Mammary epithelial cell (primary cell): ENCODE measurements at regions of chr6 and their contacts with region 1.

Region 1: GRCh38 chr6:138109042-138109997 is 2.1 kb upstream of the PERP start:
- DNase-seq: peak; percentile 76
- H3K4me3 ChIP-seq: peak overlapping the region; percentile 7 to 66 (median 25)
- H3K27ac ChIP-seq: peak overlapping the region; percentile 99
- H3K4me1 ChIP-seq: peaks cover 16% of the 10 kb centered on the region
- H3K27me3 ChIP-seq: no peaks in the 10 kb centered on the region
- CTCF ChIP-seq: peak; percentile 96 to 99

Region 2: GRCh38 chr6:137697267-137697938 is 411.9 kb before region 1 on chr6:
- CTCF ChIA-PET with region 1: no interaction called
- dilution Hi-C with region 1: no loop called
- in situ Hi-C with region 1: loop called in 1 of 2 experiments (anchors 25 kb)
- intact Hi-C with region 1: loop called (anchors 2 kb)
- DNase-seq: peak; percentile 63
- H3K4me3 ChIP-seq: no peak overlapping the region
- H3K27ac ChIP-seq: no peak overlapping the region
- H3K4me1 ChIP-seq: peaks cover 20% of the 10 kb centered on the region
- H3K27me3 ChIP-seq: no peaks in the 10 kb centered on the region
- CTCF ChIP-seq: no peak

Region 3: DNA sequence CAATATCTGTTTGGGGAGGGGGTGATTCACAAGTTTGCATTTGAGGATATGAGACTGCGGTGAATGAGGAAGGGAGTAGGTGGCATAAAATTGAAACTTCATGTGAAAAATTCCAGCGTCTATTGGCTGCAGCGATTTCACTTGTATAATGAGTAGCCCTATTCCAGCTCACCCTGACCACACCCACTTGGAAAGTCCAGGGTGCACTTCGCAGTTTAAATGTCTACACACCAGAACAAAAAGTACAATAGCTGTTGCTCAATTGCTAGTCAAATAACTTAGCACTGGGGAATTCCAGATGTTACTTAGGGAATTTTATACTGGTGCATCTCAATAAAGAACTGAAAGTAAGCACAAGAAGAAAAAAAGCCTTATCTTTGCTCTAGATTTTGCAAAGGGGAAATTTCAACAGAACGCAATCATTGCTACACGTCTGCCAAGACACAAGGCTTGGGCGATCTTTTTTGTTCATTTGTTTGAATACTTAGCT is 236.0 kb before region 1 on chr6:
- CTCF ChIA-PET with region 1: no interaction called
- dilution Hi-C with region 1: no loop called
- in situ Hi-C with region 1: no loop called
- intact Hi-C with region 1: loop called (anchors 2 kb)
- DNase-seq: peak; percentile 96
- H3K4me3 ChIP-seq: peak overlapping the region; percentile 12 to 32 (median 18)
- H3K27ac ChIP-seq: peak overlapping the region; percentile 95
- H3K4me1 ChIP-seq: peaks cover 52% of the 10 kb centered on the region
- H3K27me3 ChIP-seq: no peaks in the 10 kb centered on the region
- CTCF ChIP-seq: no peak

Region 4: DNA sequence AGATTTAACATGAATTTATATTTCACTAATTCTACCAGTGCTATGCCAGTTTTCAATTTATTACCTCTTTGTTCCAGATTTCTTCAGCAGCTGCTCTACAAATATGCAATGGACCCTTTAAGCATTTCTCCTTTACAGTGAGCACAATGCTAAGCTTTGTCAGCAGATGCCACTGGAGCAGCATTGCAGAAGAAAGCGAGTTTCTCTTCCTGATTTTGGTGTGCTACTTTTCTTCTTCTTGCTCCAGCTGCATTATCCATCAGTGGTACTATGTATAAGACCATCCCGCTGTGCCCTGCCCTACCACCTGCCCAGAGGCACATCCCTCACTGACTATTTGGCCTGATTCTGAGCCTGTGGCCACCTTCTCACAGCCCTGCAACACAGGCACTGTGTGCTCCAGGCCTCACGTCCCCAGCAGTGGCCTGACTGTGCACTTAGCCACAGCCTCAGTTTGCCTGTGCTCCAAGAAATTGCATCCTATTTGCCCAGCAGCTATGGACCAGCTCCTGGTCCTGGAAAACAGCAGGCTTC is 158.2 kb before region 1 on chr6:
- CTCF ChIA-PET with region 1: no interaction called
- dilution Hi-C with region 1: no loop called
- in situ Hi-C with region 1: no loop called
- intact Hi-C with region 1: no loop called
- DNase-seq: no peak
- H3K4me3 ChIP-seq: no peak overlapping the region
- H3K27ac ChIP-seq: no peak overlapping the region
- H3K4me1 ChIP-seq: no peaks in the 10 kb centered on the region
- H3K27me3 ChIP-seq: no peaks in the 10 kb centered on the region
- CTCF ChIP-seq: no peak

Region 5: DNA sequence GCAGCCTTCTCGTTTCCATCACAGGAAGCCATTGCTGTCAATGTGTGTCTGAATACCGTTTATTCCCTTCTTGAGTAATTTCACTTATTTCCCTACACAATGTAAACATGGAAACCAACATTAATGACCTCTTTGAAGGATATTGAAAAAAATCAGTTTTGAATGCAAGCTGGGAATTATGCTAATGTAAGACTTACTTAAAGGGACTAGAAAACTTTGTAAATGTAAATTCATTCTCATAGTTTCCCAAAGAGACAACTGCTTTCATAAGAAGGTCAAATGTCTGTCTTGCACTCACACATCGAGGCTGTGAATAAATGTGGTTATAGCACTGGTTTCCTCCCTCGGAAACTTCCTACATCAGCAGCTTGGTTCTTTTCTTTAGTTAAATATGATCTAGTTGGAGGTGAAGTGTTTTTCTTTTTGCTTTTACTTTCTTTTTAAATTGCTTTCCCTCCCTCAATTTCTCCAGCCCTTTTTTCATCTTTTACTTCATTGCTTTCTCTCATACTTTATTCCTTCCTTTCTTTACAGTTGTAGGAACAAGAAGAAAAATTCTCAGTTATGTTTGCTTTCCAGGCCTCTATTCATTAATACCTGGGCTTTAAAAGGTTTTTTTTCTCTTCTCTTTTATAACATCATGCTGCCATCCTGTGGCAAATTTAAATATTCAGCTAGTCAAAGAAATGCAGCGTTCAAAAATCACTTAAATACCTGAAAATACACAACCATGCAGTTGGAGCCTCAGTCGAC is 134.0 kb before region 1 on chr6:
- CTCF ChIA-PET with region 1: no interaction called
- dilution Hi-C with region 1: no loop called
- in situ Hi-C with region 1: no loop called
- intact Hi-C with region 1: no loop called
- DNase-seq: no peak
- H3K4me3 ChIP-seq: no peak overlapping the region
- H3K27ac ChIP-seq: no peak overlapping the region
- H3K4me1 ChIP-seq: peaks cover 4% of the 10 kb centered on the region
- H3K27me3 ChIP-seq: no peaks in the 10 kb centered on the region
- CTCF ChIP-seq: peak; percentile 31 to 43

Region 6: DNA sequence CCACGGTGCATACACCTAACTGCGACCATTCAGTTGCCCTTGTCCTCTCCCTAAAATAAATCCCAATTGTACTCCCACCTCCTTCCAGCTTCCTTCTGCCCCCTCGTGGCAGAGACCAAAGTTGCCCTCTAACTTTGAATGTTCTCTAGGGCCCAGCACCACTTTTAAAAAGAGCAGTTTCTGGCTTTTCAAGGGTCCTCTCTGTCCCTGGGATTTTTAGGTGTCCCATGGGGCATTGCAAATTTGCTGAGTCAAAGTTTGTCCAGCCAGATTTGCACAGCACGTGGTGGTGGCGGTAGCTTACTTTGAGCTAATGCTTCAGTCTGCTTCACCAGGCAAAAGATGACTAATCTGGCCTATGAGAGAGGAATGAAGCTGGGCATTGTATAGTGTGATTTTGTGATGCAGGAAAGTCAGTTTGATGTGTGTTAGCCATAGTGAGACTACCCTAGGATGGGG is 102.3 kb before region 1 on chr6:
- CTCF ChIA-PET with region 1: interaction called, 8 read pairs
- dilution Hi-C with region 1: no loop called
- in situ Hi-C with region 1: loop called (anchors 5 kb)
- intact Hi-C with region 1: loop called (anchors 1 kb)
- DNase-seq: peak; percentile 85
- H3K4me3 ChIP-seq: no peak overlapping the region
- H3K27ac ChIP-seq: peak overlapping the region; percentile 64
- H3K4me1 ChIP-seq: peaks cover 20% of the 10 kb centered on the region
- H3K27me3 ChIP-seq: no peaks in the 10 kb centered on the region
- CTCF ChIP-seq: peak; percentile 58 to 78

Region 7: DNA sequence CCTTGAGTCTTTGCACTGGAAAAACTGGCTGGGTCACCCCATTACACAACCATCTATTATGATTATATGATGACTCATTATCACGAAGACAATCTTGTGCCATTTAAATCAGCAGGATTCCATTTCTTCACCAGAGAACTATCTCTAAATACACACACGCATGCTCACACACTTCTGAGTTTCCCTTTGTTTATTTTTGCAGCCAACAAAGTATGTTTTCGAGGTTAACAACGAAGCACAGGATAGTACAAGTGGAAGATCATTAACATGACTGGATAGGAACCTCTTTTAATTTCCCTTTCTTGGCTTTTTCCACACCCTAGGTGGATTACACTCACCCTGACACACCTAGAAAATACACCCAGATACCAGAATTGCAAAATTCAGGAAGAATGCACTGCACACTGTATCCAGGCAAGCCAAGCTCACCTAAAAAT is 21.0 kb before region 1 on chr6:
- CTCF ChIA-PET with region 1: no interaction called
- dilution Hi-C with region 1: no loop called
- in situ Hi-C with region 1: no loop called
- intact Hi-C with region 1: loop called (anchors 1 kb)
- DNase-seq: peak; percentile 95
- H3K4me3 ChIP-seq: peak overlapping the region in 2 of 3 experiments; percentile 3 to 9
- H3K27ac ChIP-seq: peak overlapping the region; percentile 98
- H3K4me1 ChIP-seq: peaks cover 41% of the 10 kb centered on the region
- H3K27me3 ChIP-seq: no peaks in the 10 kb centered on the region
- CTCF ChIP-seq: no peak

Region 8: DNA sequence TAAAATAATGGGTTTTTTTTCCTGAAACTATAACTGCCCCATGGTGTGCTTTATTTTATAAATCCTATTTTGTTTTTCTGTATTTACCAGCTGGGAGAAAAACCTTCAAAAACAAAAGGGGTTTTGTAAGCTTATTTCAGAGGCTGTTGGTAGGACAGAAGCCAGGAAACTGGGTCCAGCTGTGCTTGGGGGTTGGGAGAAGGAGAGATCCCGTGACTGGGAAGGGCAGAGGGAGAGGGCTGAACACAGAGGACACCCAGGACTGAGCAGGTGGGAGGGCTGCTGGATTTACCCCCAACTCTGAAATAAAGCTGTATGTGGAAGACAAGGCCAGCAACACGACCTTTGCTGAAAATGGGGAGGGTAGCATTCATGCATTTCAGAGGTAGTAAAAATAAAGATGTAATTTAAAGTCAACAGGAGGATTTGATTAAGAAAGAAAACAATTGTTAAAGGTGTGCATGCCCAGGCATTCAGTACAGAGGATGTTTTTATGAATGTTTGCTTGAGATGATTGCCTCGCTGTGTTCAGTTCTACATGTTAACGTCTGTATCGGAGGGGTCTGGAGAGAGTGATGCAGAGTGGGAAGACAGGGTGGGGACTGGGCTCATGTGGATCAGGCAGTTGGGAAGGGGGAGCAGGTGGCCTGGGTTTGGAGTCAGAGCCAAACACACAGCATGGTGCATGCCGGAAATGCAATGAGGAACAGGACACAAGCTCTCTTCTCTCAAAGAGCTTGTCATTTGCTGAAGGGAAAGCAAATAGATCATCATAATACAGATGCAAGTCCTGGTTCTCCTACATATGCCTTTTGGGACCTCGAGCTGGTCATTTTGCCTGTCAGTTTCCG is 73.8 kb after region 1 on chr6:
- CTCF ChIA-PET with region 1: no interaction called
- dilution Hi-C with region 1: no loop called
- in situ Hi-C with region 1: no loop called
- intact Hi-C with region 1: no loop called
- DNase-seq: no peak
- H3K4me3 ChIP-seq: no peak overlapping the region
- H3K27ac ChIP-seq: no peak overlapping the region
- H3K4me1 ChIP-seq: no peaks in the 10 kb centered on the region
- H3K27me3 ChIP-seq: no peaks in the 10 kb centered on the region
- CTCF ChIP-seq: no peak